ENCODE measurements at regions of chr6 and their contacts with region 1.

Region 1: GRCh38 chr6:138588805-138589434 is 89.6 kb upstream of the NHSL1 start:
- H3K4me3 Mint-ChIP-seq: no peak overlapping the region
- H3K27ac Mint-ChIP-seq: no peak overlapping the region
- H3K4me1 Mint-ChIP-seq: peaks cover 42% of the 10 kb centered on the region
- H3K27me3 Mint-ChIP-seq: peaks cover 13% of the 10 kb centered on the region

Region 2: GRCh38 chr6:138188278-138188941 is 400.5 kb before region 1 on chr6:
- intact Hi-C with region 1: no loop called
- H3K4me3 Mint-ChIP-seq: no peak overlapping the region
- H3K27ac Mint-ChIP-seq: no peak overlapping the region
- H3K4me1 Mint-ChIP-seq: no peaks in the 10 kb centered on the region
- H3K27me3 Mint-ChIP-seq: peaks cover 2% of the 10 kb centered on the region

Region 3: GRCh38 chr6:138278326-138278725 is 310.6 kb before region 1 on chr6:
- intact Hi-C with region 1: no loop called
- H3K4me3 Mint-ChIP-seq: no peak overlapping the region
- H3K27ac Mint-ChIP-seq: no peak overlapping the region
- H3K4me1 Mint-ChIP-seq: no peaks in the 10 kb centered on the region
- H3K27me3 Mint-ChIP-seq: no peaks in the 10 kb centered on the region

Region 4: GRCh38 chr6:138555421-138555988 is 33.4 kb before region 1 on chr6:
- intact Hi-C with region 1: no loop called
- H3K4me3 Mint-ChIP-seq: no peak overlapping the region
- H3K27ac Mint-ChIP-seq: no peak overlapping the region
- H3K4me1 Mint-ChIP-seq: peaks cover 17% of the 10 kb centered on the region
- H3K27me3 Mint-ChIP-seq: no peaks in the 10 kb centered on the region

Region 5: GRCh38 chr6:138673346-138674014 is 84.6 kb after region 1 on chr6:
- intact Hi-C with region 1: loop called (anchors 5 kb)
- H3K4me3 Mint-ChIP-seq: peak overlapping the region; percentile 23
- H3K27ac Mint-ChIP-seq: peak overlapping the region; percentile 84
- H3K4me1 Mint-ChIP-seq: peaks cover 59% of the 10 kb centered on the region
- H3K27me3 Mint-ChIP-seq: no peaks in the 10 kb centered on the region

Region 6: GRCh38 chr6:139663996-139664395 is 1075.1 kb after region 1 on chr6:
- intact Hi-C with region 1: no loop called
- H3K4me3 Mint-ChIP-seq: no peak overlapping the region
- H3K27ac Mint-ChIP-seq: no peak overlapping the region
- H3K4me1 Mint-ChIP-seq: peaks cover 5% of the 10 kb centered on the region
- H3K27me3 Mint-ChIP-seq: no peaks in the 10 kb centered on the region

Measured in dendritic cell treated with granulocyte-macrophage colony-stimulating factor and Interleukin-4, amounts not matched to agents 40 ng/mL and 50 ng/mL, for 4 days (primary cell).